ENCODE measurements at regions of chr1 and their contacts with region 1.

Region 1: DNA sequence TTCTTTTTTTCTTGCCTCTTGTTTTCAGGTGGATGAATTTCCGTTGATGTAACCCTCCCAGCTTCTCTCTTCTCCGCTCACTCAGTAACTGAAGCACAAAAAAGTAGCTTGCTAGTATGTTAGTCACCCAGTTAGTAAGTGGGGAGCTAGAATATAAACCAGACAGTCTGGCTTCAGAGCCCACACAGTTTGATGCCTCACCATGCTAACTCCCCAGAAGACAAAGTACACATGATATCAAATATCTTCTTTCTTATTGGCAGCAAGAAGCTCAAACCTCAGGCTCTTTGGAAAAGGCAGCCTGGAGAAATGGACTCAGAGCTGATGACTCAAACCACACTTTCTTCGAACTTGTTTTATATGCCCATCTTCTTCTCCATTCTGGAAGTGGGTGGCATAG is 187.5 kb upstream of the PLXNA2 start:
- DNase-seq: no peak
- H3K4me3 ChIP-seq: no peak overlapping the region
- H3K27ac ChIP-seq: no peak overlapping the region
- H3K4me1 ChIP-seq: no peaks in the 10 kb centered on the region
- H3K27me3 ChIP-seq: no peaks in the 10 kb centered on the region
- CTCF ChIP-seq: no peak
- POLR2A ChIP-seq: no peak

Region 2: DNA sequence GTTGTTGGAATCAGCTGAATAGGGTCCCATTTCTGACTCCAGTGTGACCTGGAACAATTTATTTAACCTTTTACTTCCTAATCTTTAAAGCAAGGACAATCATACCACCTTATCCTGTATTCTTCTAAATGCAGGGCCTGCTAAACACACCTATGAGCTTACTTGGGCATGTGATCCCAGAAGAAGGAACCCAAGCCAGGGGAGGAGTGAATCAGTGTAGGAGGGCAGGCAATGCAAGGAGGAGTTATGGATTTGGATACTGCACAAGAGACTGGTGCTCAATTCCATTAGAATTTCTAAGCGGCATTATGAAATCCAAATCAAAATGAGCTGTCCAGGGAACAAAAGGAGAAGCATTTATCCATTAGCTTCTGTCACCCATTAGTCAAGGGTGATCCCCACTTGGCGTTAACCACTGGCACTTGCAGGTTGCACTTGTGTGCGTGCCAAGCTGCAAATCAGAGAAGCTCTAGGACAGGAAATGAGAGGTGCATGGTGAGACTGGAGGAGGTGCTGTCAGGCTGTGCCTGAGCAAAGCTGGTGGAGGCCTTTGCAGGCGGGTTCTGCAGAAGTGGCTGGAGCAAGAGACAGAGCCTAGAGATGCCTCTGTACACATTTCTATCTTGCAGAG is 109.6 kb after region 1 on chr1:
- intact Hi-C with region 1: loop called (anchors 5 kb)
- DNase-seq: no peak
- H3K4me3 ChIP-seq: no peak overlapping the region
- H3K27ac ChIP-seq: no peak overlapping the region
- H3K4me1 ChIP-seq: no peaks in the 10 kb centered on the region
- H3K27me3 ChIP-seq: no peaks in the 10 kb centered on the region
- CTCF ChIP-seq: no peak
- POLR2A ChIP-seq: no peak

Region 3: GRCh38 chr1:209012443-209013196 is 580.9 kb after region 1 on chr1:
- intact Hi-C with region 1: no loop called
- DNase-seq: no peak
- H3K4me3 ChIP-seq: no peak overlapping the region
- H3K27ac ChIP-seq: no peak overlapping the region
- H3K4me1 ChIP-seq: no peaks in the 10 kb centered on the region
- H3K27me3 ChIP-seq: no peaks in the 10 kb centered on the region
- CTCF ChIP-seq: no peak
- POLR2A ChIP-seq: no peak

Measured in breast epithelium (tissue), 4 donors.